ENCODE measurements at regions of chr10 and their contacts with region 1.

Region 1: DNA sequence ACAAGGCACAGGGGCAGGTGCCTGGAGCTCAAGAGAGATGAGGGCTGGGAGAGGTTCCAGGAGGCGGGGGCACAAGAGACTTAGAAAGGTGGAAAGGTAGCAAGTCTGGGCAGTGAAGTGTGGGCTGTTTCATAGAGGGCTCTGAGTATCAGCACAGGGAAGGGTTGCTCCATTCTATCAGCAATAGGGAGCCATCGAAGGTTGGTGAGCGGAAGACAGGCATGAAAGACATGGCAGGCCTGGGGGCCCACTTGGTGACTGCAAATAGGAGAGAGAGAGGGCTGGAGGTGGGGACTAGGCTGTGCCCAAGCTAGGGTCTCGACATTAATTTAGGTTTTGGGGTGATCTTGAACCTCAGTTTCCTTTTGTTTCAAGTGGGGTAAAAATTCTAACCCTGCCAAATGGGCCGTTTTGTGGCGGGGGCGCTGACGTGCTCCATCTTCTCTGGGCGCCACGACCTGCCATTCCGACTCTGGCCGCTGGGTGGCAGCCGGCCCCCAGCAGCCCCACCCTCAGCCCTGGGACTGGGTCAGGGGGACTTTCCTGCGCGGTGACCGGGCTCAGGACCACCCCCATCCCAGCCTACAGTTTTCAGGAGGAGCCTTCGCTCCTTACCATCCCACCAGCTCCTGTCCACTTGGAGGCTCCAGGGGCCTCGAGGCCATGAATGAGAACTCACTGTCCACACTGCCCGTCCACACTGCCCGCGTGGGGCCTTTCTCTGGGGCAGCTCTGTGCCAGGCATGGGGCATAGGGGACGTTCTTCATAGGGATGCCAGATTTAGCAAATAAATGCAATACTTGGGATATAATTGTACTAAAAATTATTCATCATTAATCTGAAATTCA is 37.2 kb upstream of the PCBD1 start:
- DNase-seq: peak; percentile 46
- H3K4me3 ChIP-seq: no peak overlapping the region
- H3K27ac ChIP-seq: no peak overlapping the region
- H3K4me1 ChIP-seq: no peaks in the 10 kb centered on the region
- H3K27me3 ChIP-seq: peaks cover 41% of the 10 kb centered on the region

Region 2: DNA sequence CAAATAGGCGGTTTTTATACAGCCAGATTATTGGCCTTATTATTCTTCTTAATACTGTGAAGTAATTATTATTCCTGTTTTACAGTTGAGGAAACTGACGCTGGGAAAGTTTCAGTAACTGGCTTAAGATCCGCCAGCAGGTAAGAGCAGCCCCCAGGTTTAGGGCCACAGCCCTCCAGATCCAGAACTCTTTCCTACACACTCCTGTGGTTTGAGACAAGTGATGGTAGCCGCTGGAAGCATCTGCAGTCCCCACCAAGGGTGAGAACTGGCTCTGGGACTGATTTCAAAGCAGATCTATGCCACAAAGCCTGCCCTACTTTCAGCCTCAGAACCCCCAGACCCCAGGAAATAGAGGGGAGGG is 283.7 kb after region 1 on chr10:
- in situ Hi-C with region 1: loop called (anchors 10 kb)
- DNase-seq: no peak
- H3K4me3 ChIP-seq: no peak overlapping the region
- H3K27ac ChIP-seq: no peak overlapping the region
- H3K4me1 ChIP-seq: peaks cover 14% of the 10 kb centered on the region
- H3K27me3 ChIP-seq: peaks cover 27% of the 10 kb centered on the region

Region 3: GRCh38 chr10:71285180-71285545 is 359.6 kb after region 1 on chr10:
- in situ Hi-C with region 1: loop called (anchors 10 kb)
- DNase-seq: peak; percentile 65
- H3K4me3 ChIP-seq: no peak overlapping the region
- H3K27ac ChIP-seq: no peak overlapping the region
- H3K4me1 ChIP-seq: no peaks in the 10 kb centered on the region
- H3K27me3 ChIP-seq: no peaks in the 10 kb centered on the region

Measured in GM23248 (cell line).